ENCODE measurements at regions of chr1 and their contacts with region 1.

Region 1: GRCh38 chr1:3598051-3598491 is 13.2 kb downstream of the MEGF6 start:
- DNase-seq: no peak
- H3K4me3 ChIP-seq: peak overlapping the region in 2 of 3 experiments; percentile 16 to 67
- H3K4me3 Mint-ChIP-seq: peak overlapping the region; percentile 76 to 88
- H3K27ac ChIP-seq: no peak overlapping the region
- H3K27ac Mint-ChIP-seq: no peak overlapping the region
- H3K4me1 ChIP-seq: peaks cover 20 to 24% of the 10 kb centered on the region in 2 donors
- H3K4me1 Mint-ChIP-seq: peaks cover 25% of the 10 kb centered on the region
- H3K27me3 ChIP-seq: no peaks in the 10 kb centered on the region
- H3K27me3 Mint-ChIP-seq: peaks cover 8 to 13% (median 9%) of the 10 kb centered on the region in 3 donors
- CTCF ChIP-seq: no peak

Region 2: GRCh38 chr1:3441410-3441847 is 156.6 kb before region 1 on chr1:
- intact Hi-C with region 1: loop called in 1 of 2 experiments (anchors 10 kb)
- DNase-seq: no peak
- H3K4me3 ChIP-seq: no peak overlapping the region
- H3K4me3 Mint-ChIP-seq: no peak overlapping the region
- H3K27ac ChIP-seq: no peak overlapping the region
- H3K27ac Mint-ChIP-seq: no peak overlapping the region
- H3K4me1 ChIP-seq: no peaks in the 10 kb centered on the region
- H3K4me1 Mint-ChIP-seq: no peaks in the 10 kb centered on the region
- H3K27me3 ChIP-seq: no peaks in the 10 kb centered on the region
- H3K27me3 Mint-ChIP-seq: peaks cover 8 to 13% (median 12%) of the 10 kb centered on the region in 3 donors
- CTCF ChIP-seq: no peak